WTC11 (cell line): ENCODE measurements at regions of chrX and their contacts with region 1.

Region 1: GRCh38 chrX:49191033-49191871 is 5.1 kb upstream of the PRICKLE3 start:
- DNase-seq: peak; percentile 81
- ATAC-seq: peak; percentile 89
- H3K4me3 Mint-ChIP-seq: peak overlapping the region; percentile 83
- H3K27ac Mint-ChIP-seq: peak overlapping the region; percentile 84
- H3K4me1 Mint-ChIP-seq: peaks cover 32% of the 10 kb centered on the region
- H3K27me3 Mint-ChIP-seq: no peaks in the 10 kb centered on the region; the same call in 1 of the 2 replicates
- CTCF ChIP-seq: no peak

Region 2: DNA sequence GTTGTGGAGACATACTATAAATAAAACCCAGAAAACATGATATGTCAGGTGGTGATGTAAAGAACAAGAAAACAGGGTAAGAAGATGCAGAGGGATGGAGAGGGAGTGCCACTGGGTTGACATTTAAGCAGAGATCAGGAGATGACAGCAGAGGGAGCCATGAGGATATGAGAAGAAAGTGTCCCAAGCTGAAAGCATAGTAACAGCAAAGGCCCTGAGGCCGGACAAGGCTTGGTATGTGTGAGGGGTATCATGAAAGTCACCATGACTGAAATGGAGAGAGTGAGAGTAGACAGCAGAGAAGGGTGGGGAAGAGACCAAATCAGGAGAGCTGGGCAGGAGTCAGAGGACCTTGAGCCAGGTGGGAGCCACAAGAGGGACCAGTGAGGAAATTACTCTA is 71.2 kb before region 1 on chrX:
- CTCF ChIA-PET with region 1: no interaction called
- POLR2A ChIA-PET with region 1: no interaction called
- DNase-seq: no peak
- ATAC-seq: no peak
- H3K4me3 Mint-ChIP-seq: no peak overlapping the region
- H3K27ac Mint-ChIP-seq: no peak overlapping the region
- H3K4me1 Mint-ChIP-seq: peaks cover 8% of the 10 kb centered on the region
- H3K27me3 Mint-ChIP-seq: no peaks in the 10 kb centered on the region
- CTCF ChIP-seq: no peak

Region 3: DNA sequence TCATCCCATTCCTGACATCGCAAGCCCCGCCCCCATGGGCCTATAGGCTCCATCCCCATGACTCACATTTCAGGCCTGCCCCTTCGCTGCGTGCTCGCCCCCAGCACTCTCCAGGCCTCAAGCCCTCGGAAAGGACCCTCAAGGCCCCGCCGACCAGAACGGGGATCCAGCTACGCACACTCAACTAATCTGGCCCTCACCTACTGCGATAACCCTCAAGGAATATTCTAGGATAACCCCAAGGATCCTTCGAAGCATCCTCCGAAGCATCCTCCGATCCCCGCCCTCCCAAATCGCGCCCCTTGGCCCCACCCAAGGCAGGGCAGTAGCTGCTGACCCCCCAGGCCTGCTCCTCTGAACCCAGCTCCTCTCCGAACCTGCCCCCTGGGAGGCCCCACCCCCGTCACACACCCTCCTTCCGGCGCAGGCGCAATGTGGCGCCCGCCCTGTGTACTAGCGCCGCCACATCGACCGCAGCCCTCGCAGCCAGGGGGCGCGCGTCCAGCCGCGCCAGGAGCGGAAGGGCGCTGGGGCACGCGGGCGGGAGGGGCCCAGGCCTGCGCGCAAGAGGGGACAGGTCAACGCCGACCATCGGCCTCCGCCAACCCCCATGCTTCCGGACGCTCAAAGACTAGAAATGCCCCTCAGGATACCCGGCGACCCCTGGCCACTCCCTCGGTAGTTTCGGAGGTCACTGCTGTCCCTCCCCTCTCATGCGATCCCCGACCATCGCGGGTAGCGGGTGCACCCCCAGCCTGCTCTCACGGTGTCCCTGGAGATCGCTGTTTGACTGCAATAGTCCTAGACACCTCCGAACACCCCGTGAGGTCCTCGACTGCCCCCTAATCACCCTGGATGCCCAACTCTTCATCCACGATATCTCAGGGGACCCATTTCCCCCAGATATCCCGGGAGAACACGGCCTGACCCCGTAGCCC is 35.1 kb before region 1 on chrX:
- CTCF ChIA-PET with region 1: interaction called, 10 read pairs
- POLR2A ChIA-PET with region 1: interaction called, 4 read pairs
- DNase-seq: peak; percentile 82
- ATAC-seq: peak; percentile 90
- H3K4me3 Mint-ChIP-seq: peak overlapping the region; percentile 80
- H3K27ac Mint-ChIP-seq: peak overlapping the region; percentile 94
- H3K4me1 Mint-ChIP-seq: peaks cover 9% of the 10 kb centered on the region
- H3K27me3 Mint-ChIP-seq: peaks cover 39% of the 10 kb centered on the region
- CTCF ChIP-seq: peak; percentile 31; the same call in 1 of the 2 replicates

Region 4: DNA sequence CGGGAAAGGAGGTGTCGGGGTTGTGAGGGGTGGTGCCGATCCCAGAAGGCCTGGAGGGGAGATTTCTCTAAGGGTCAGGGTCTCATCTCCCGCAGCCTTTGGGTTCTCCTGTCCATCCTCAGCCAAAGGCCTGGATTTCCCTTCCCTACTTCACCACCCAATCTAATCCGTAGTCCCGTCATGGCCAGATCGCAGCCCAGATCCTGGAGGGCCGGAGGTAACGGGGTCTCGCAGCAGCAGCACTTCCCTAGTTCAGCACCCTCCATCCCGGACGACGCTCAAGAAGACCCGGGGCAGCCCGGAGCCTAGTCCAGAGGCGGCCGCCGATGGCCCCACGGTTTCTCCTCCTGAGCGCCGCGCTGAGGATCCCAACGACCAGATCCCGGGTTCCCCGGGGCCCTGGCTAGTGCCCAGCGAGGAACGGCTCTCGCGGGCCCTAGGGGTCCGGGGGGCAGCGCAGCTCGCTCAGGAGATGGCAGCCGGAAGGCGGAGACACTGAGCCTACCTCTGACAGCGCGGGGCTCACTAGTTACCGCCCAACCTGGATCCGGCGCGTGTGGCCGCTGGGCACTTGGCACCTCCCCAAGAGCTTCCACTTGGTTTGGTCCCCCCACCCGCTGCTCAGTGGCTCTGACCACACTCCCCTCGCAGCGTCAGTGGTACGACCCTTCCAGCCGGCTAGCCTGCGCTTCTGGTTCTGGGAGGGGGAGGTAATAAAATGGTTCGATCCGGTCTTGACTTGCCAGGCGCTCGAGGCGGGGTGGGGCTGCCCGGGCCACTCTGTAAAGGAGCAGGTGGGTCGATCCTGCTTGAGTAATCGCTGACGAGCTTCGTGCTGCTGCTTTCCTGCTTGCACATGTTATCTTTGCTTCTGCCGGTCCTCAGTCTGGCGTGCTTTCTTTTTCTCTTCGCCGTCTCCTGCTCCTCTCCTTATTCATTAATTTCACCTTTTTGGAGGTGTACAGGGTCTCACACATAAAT is 25.1 kb before region 1 on chrX:
- CTCF ChIA-PET with region 1: interaction called, 11 read pairs
- POLR2A ChIA-PET with region 1: no interaction called
- DNase-seq: peak; percentile 89
- ATAC-seq: peak; percentile 63
- H3K4me3 Mint-ChIP-seq: peak overlapping the region; percentile 66
- H3K27ac Mint-ChIP-seq: 0 out of 2 replicates have a peak overlapping the region, but pooled peaks have one; percentile 58
- H3K4me1 Mint-ChIP-seq: peaks cover 13% of the 10 kb centered on the region
- H3K27me3 Mint-ChIP-seq: peaks cover 65% of the 10 kb centered on the region
- CTCF ChIP-seq: no peak

Region 5: GRCh38 chrX:49209434-49210251 is 18.4 kb after region 1 on chrX:
- CTCF ChIA-PET with region 1: interaction called, 19 read pairs
- POLR2A ChIA-PET with region 1: interaction called, 6 read pairs
- DNase-seq: peak; percentile 34
- ATAC-seq: peak; percentile 78
- H3K4me3 Mint-ChIP-seq: peak overlapping the region; percentile 24
- H3K27ac Mint-ChIP-seq: no peak overlapping the region
- H3K4me1 Mint-ChIP-seq: no peaks in the 10 kb centered on the region
- H3K27me3 Mint-ChIP-seq: no peaks in the 10 kb centered on the region
- CTCF ChIP-seq: no peak

Region 6: GRCh38 chrX:49230469-49231232 is 39.4 kb after region 1 on chrX:
- CTCF ChIA-PET with region 1: interaction called, 13 read pairs
- POLR2A ChIA-PET with region 1: interaction called, 4 read pairs
- DNase-seq: peak; percentile 82
- ATAC-seq: peak; percentile 88
- H3K4me3 Mint-ChIP-seq: peak overlapping the region; percentile 75
- H3K27ac Mint-ChIP-seq: peak overlapping the region; percentile 57; the same call in 1 of the 2 replicates
- H3K4me1 Mint-ChIP-seq: peaks cover 10% of the 10 kb centered on the region
- H3K27me3 Mint-ChIP-seq: peaks cover 7% of the 10 kb centered on the region
- CTCF ChIP-seq: no peak

Region 7: GRCh38 chrX:49269010-49269767 is 77.9 kb after region 1 on chrX:
- CTCF ChIA-PET with region 1: interaction called, 13 read pairs
- POLR2A ChIA-PET with region 1: interaction called, 4 read pairs
- DNase-seq: peak; percentile 89
- ATAC-seq: peak; percentile 89
- H3K4me3 Mint-ChIP-seq: peak overlapping the region; percentile 95
- H3K27ac Mint-ChIP-seq: peak overlapping the region; percentile 100
- H3K4me1 Mint-ChIP-seq: peaks cover 22% of the 10 kb centered on the region
- H3K27me3 Mint-ChIP-seq: no peaks in the 10 kb centered on the region
- CTCF ChIP-seq: no peak